ENCODE measurements at regions of chr11 and their contacts with region 1.

Region 1: GRCh38 chr11:74702383-74703007 is 28.7 kb downstream of the CHRDL2 start:
- DNase-seq: peak; percentile 81
- ATAC-seq: peak; percentile 91
- H3K4me3 Mint-ChIP-seq: no peak overlapping the region
- H3K27ac Mint-ChIP-seq: no peak overlapping the region
- H3K4me1 Mint-ChIP-seq: peaks cover 2% of the 10 kb centered on the region
- H3K27me3 Mint-ChIP-seq: no peaks in the 10 kb centered on the region; the same call in 1 of the 2 replicates
- CTCF ChIP-seq: peak; percentile 87

Region 2: GRCh38 chr11:74611369-74611861 is 91.1 kb before region 1 on chr11:
- CTCF ChIA-PET with region 1: interaction called, 10 read pairs
- POLR2A ChIA-PET with region 1: no interaction called
- DNase-seq: no peak
- ATAC-seq: no peak
- H3K4me3 Mint-ChIP-seq: no peak overlapping the region
- H3K27ac Mint-ChIP-seq: no peak overlapping the region
- H3K4me1 Mint-ChIP-seq: no peaks in the 10 kb centered on the region
- H3K27me3 Mint-ChIP-seq: no peaks in the 10 kb centered on the region
- CTCF ChIP-seq: no peak; the same call in 1 of the 2 replicates

Region 3: DNA sequence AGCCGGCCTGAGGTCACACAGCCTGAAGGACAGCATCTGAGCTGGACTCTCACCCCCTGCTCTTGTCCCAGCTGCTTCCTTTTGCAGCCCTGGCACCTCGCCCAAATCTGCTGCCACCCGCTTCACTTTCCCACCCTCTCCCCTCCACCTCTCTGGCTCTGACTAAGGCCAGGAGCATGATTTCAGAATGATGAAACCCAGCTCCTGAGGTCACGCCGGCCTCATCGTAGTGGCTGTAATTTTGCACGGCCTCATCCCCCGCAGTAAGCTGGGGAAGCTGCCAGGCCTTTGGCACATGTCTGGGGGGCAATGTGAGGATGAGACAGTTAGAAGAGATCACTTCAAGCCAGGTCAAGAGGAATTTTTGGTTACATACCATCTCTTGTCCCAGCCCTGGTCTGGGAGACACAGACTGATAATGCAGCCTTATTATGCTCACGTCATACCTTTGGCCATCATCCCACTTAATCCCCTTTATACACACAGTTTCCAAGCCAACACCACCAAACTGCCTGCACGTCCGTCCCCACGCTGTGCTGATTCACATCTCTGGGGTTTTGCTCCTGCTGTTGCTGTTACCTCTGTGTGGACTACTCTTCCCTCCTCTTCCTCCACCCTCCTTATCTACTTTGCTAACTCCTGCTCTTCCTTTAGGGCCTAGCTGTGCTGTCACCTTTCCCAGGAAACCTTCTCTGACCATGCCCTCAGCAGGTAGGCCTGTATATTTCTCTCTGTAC is 29.4 kb before region 1 on chr11:
- CTCF ChIA-PET with region 1: interaction called, 32 read pairs
- POLR2A ChIA-PET with region 1: no interaction called
- DNase-seq: no peak
- ATAC-seq: no peak
- H3K4me3 Mint-ChIP-seq: no peak overlapping the region
- H3K27ac Mint-ChIP-seq: no peak overlapping the region
- H3K4me1 Mint-ChIP-seq: no peaks in the 10 kb centered on the region
- H3K27me3 Mint-ChIP-seq: no peaks in the 10 kb centered on the region; the same call in 1 of the 2 replicates
- CTCF ChIP-seq: no peak

Region 4: GRCh38 chr11:74683279-74683871 is 19.1 kb before region 1 on chr11:
- CTCF ChIA-PET with region 1: interaction called, 134 read pairs
- POLR2A ChIA-PET with region 1: no interaction called
- DNase-seq: peak; percentile 68
- ATAC-seq: peak; percentile 68
- H3K4me3 Mint-ChIP-seq: peak overlapping the region; percentile 66
- H3K27ac Mint-ChIP-seq: no peak overlapping the region
- H3K4me1 Mint-ChIP-seq: peaks cover 7% of the 10 kb centered on the region
- H3K27me3 Mint-ChIP-seq: peaks cover 21% of the 10 kb centered on the region
- CTCF ChIP-seq: no peak

Region 5: DNA sequence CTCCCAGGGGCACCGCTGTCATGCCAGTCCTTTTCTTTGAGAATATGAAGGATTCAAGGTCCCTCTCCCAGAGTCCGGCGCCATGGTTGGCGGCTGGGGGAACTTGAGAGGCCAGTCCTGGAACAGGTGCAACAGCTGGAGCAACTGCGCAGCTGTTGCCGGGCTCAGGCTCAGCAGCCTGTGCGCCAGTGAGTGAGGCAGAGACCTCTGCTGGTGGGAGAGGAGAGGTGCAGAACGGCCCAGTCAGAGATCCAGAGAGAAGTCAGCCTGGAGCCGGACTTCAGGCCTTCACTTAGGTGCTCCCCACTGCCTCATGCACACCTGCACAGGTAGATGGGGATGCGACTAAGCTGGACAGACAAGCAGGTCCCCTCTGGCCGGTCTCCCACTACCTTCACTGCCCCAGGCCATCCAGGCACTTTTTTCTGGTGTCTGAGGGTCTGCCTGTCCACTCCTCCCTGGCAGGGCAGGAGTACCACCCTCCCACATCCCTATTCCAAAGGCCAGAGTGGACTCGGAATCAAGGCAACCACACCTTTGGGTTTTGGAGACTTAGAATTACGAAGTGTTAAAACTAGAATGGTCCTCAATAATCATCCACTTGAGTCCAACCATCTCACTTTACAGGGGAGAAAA is 24.2 kb after region 1 on chr11:
- CTCF ChIA-PET with region 1: interaction called, 263 read pairs
- POLR2A ChIA-PET with region 1: interaction called, 3 read pairs
- DNase-seq: peak; percentile 79
- ATAC-seq: peak; percentile 90
- H3K4me3 Mint-ChIP-seq: no peak overlapping the region
- H3K27ac Mint-ChIP-seq: no peak overlapping the region
- H3K4me1 Mint-ChIP-seq: peaks cover 6% of the 10 kb centered on the region; the same call in 1 of the 2 replicates
- H3K27me3 Mint-ChIP-seq: peaks cover 78% of the 10 kb centered on the region
- CTCF ChIP-seq: peak; percentile 72

Region 6: DNA sequence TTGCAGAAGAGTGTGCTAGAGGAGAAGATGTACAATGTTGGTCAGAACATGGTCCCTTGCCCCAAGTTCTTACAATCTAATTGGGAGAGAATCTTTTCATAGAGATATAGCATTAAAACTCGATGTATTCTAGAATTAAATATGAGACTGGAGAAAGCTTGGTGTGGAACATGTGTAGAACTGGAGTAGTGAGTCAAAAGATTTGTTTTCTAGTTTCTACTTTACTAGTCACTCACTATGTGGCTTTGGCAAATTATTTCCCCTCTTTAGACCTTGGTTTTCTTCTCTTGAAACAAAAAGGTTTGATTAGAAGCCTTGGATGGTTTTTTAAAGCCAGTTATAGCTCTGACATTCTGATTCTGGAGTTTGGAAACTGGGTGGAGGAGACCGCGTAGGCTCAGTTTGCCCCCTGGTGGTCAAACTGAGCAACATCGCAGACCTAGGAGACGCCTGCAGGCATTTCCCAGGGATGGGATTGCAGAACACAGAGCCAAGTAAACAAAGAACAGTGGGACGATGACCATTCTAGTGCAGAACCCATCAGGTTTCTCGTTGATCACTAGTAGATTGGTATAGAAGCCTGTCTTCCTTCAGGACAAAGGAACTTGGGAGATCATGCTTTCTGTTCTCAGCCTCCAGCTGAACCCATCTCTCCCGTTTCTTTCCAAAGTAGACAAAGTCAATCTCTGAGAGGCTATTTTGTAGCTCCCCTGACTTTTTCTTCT is 37.2 kb after region 1 on chr11:
- CTCF ChIA-PET with region 1: interaction called, 96 read pairs
- POLR2A ChIA-PET with region 1: no interaction called
- DNase-seq: peak; percentile 62
- ATAC-seq: peak; percentile 98
- H3K4me3 Mint-ChIP-seq: no peak overlapping the region
- H3K27ac Mint-ChIP-seq: no peak overlapping the region
- H3K4me1 Mint-ChIP-seq: 0 out of 2 replicates have a peak, but pooled peaks cover 2% of the 10 kb centered on the region
- H3K27me3 Mint-ChIP-seq: peaks cover 13% of the 10 kb centered on the region
- CTCF ChIP-seq: peak; percentile 91